HepG2 (cell line): ENCODE measurements at regions of chr1 and their contacts with region 1.

Region 1: DNA sequence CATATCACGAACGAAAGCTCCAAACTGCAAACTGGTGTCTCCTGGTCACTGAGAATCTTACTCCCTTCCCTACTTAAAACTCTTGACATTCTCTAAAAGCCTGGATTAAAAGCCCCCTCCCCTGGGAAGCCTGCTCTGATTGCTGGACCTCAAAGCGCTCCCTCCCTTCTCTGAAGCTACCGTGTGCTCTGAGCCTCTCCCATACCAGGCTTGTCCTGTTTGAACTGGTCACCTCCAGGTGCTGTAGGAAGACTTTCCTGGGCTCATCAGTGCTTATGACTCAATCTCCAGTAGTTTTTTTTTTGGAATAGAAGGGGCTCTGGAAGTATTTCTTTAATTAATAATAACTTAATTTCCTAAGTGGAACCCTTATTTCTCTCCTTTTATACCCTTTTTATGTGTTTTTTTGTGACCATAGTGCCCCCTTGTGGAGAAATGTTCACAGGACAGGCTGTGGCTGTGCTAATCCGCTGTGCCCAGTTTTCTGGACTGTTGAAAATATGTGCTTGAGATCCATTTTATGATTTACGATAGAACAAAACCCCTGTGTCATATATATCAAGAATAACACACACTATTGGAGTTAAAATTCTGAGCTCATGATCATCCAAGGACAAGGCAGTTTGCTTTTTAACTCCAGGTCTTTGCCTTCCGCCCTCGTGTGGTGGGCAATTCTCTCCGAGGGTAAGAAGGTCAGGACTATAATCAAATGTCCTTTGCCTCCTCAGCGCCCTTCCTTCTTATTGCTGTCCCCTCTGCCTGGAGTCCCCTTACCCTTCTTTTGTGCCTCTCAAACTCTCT is 16.9 kb downstream of the MTARC1 start:
- DNase-seq: peak; percentile 25
- ATAC-seq: peak; percentile 83
- H3K4me3 ChIP-seq: no peak overlapping the region
- H3K27ac ChIP-seq: no peak overlapping the region
- H3K4me1 ChIP-seq: no peaks in the 10 kb centered on the region
- H3K27me3 ChIP-seq: no peaks in the 10 kb centered on the region
- CTCF ChIP-seq: peak; percentile 59
- EP300 ChIP-seq: no peak
- POLR2A ChIP-seq: no peak
- RAD21 ChIP-seq: no peak

Region 2: DNA sequence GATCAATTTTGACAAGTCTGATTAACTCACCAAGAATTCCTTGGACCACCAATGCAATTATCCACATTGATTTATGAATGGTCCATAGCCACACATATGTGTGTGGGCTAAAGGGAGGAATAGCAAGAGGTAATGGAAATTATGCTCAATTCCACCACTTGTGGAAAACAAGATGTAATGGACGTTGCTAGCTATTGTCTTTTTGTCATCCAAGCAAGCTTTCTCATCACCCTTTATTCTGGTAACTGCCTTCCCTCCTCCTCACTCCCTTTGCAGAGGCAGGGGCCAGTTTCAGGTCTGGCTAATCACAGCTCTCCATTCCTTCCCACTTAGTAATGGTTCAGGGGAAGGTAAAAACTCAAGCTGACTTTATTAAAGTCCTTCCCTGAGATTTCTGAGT is 506.6 kb before region 1 on chr1:
- CTCF ChIA-PET with region 1: interaction called, 4 read pairs
- POLR2A ChIA-PET with region 1: no interaction called
- in situ Hi-C with region 1: no loop called
- intact Hi-C with region 1: loop called (anchors 2 kb)
- DNase-seq: no peak
- ATAC-seq: no peak
- H3K4me3 ChIP-seq: no peak overlapping the region
- H3K27ac ChIP-seq: no peak overlapping the region
- H3K4me1 ChIP-seq: no peaks in the 10 kb centered on the region
- H3K27me3 ChIP-seq: peaks cover 0 to 8% of the 10 kb centered on the region in 2 experiments; a peak in 1 of 5 replicates
- CTCF ChIP-seq: no peak
- EP300 ChIP-seq: no peak
- POLR2A ChIP-seq: no peak
- RAD21 ChIP-seq: no peak

Region 3: GRCh38 chr1:220378571-220379302 is 424.9 kb before region 1 on chr1:
- CTCF ChIA-PET with region 1: no interaction called
- POLR2A ChIA-PET with region 1: no interaction called
- in situ Hi-C with region 1: no loop called
- intact Hi-C with region 1: loop called (anchors 5 kb)
- DNase-seq: peak; percentile 5
- ATAC-seq: peak; percentile 94
- H3K4me3 ChIP-seq: no peak overlapping the region
- H3K27ac ChIP-seq: no peak overlapping the region
- H3K4me1 ChIP-seq: peaks cover 10% of the 10 kb centered on the region
- H3K27me3 ChIP-seq: no peaks in the 10 kb centered on the region
- CTCF ChIP-seq: no peak
- EP300 ChIP-seq: no peak
- POLR2A ChIP-seq: no peak
- RAD21 ChIP-seq: no peak